Ascending aorta (tissue), 2 donors: ENCODE measurements at regions of chr1 and their contacts with region 1.

Region 1: GRCh38 chr1:114511032-114511785 is at the start of gene TRIM33:
- DNase-seq: peak; percentile 39 to 94
- H3K4me3 ChIP-seq: peak within 1 kb of the TSS; percentile 78 to 92
- H3K27ac ChIP-seq: peak within 1 kb of the TSS; percentile 91 to 98
- H3K4me1 ChIP-seq: peaks cover 0 to 24% of the 10 kb centered on the region in 2 donors
- H3K27me3 ChIP-seq: no peaks in the 10 kb centered on the region
- CTCF ChIP-seq: peak in 1 of 3 experiments; percentile 15
- total RNA-seq, gene TRIM33: 42.5 TPM

Region 2: GRCh38 chr1:113811888-113812660 is 699.1 kb before region 1 on chr1 and contains the start of gene RSBN1:
- intact Hi-C with region 1: loop called (anchors 1 kb)
- DNase-seq: peak; percentile 99 to 100
- H3K4me3 ChIP-seq: peak within 1 kb of the TSS; percentile 82 to 91
- H3K27ac ChIP-seq: peak within 1 kb of the TSS; percentile 95 to 97
- H3K4me1 ChIP-seq: peaks cover 0 to 5% of the 10 kb centered on the region in 2 donors
- H3K27me3 ChIP-seq: no peaks in the 10 kb centered on the region
- CTCF ChIP-seq: peak in 1 of 3 experiments; percentile 7
- total RNA-seq, gene RSBN1: 22.7 TPM

Region 3: DNA sequence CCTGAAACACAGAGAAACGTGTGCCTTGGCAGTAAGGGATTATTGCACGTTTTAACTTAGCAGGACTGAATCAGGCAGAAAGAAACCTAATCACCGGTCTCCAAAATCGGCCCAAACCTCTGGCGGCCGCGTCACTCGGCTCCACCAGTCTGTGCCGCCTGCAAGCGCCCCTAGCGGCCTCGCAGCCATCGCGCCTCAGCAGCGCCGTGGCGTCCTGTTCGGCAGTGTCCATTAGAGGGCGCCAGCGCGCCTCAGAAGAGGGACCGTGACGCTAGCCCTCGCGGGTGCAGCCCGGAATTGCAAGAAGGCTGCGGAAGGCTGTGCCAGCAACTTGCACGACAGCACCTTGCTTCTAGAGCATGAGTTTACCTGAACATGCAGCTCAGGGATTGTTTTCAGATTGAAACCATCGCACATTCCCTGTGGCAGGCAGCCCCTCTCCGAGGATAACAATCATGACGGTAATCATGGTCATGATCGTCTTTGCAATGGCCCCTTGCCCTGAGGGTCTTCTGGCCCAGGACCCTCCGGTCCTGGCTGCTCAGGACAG is 164.7 kb before region 1 on chr1:
- intact Hi-C with region 1: loop called (anchors 1 kb)
- DNase-seq: peak; percentile 74 to 98
- H3K4me3 ChIP-seq: peak overlapping the region; percentile 69 to 78
- H3K27ac ChIP-seq: peak overlapping the region; percentile 88 to 94
- H3K4me1 ChIP-seq: peaks cover 6 to 8% of the 10 kb centered on the region in 2 donors
- H3K27me3 ChIP-seq: no peaks in the 10 kb centered on the region
- CTCF ChIP-seq: peak; percentile 100

Region 4: DNA sequence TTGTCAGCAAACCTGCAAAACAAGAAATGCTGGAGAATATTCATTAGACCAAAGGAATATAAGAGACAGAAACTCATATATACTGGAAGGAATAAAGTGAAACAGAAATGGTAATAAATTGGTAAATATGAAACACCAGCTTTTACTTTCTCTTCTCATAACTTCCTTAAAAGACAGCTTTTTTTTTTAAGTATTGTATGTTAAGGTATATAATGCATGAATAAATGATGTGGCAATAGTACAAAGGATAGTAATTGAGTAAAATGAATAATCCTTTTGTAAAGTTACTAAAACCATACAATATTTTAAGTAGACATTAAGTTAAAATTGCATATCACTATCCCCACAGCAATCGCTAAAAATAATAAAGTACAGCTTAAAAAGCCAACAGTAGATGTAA is 65.0 kb before region 1 on chr1:
- intact Hi-C with region 1: no loop called
- DNase-seq: no peak
- H3K4me3 ChIP-seq: no peak overlapping the region
- H3K27ac ChIP-seq: no peak overlapping the region
- H3K4me1 ChIP-seq: no peaks in the 10 kb centered on the region
- H3K27me3 ChIP-seq: no peaks in the 10 kb centered on the region
- CTCF ChIP-seq: no peak

Region 5: DNA sequence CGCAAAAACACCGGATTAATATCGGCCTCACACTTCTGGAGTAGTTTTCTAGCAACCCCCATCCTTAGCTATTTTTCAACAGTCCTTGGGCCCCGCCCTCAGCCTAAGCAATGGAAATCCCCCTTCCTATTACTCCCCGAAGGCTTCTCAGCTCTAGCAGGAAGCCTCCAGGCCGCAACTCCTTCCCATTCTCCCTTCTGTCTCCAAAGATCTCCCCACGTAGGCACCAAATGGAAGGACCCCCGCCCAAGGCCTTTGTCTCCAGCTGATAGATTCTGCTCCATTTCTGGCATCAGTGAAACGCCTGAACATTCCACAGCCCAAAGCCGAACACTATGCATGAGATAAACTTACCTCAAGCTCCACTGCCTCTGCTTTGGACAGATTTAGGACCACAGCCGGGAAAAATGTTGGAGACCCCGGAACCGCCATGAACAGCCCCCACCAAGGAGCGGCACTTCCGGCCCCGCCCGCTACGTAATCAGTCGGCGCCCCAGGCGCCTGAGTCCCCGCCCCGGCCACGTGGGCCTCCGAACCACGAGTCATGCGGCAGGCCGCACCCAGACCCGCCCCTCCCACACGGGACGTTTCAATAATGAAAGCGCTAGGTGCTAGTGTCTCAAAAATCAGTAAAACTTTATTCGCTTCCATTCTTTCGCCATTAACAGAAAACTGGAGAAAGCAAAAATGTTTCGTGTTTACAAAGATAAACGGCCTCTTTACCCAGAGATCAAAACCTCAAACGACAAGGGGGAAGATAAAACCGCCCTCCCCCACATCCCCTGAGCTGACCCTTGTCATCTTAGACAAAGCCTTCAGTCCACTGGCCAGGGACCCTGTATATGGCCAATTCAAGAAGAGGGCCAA is 205.3 kb after region 1 on chr1 and contains the start of gene NRAS:
- intact Hi-C with region 1: loop called (anchors 5 kb)
- DNase-seq: peak; percentile 71 to 97
- H3K4me3 ChIP-seq: peak within 1 kb of the TSS; percentile 86 to 99
- H3K27ac ChIP-seq: peak within 1 kb of the TSS; percentile 87 to 95
- H3K4me1 ChIP-seq: peaks cover 3 to 12% of the 10 kb centered on the region in 2 donors
- H3K27me3 ChIP-seq: no peaks in the 10 kb centered on the region
- CTCF ChIP-seq: no peak
- total RNA-seq, gene NRAS: 10.7 TPM

Region 6: GRCh38 chr1:114757455-114758250 is 246.4 kb after region 1 on chr1 and contains the start of gene CSDE1:
- intact Hi-C with region 1: loop called (anchors 1 kb)
- DNase-seq: peak; percentile 90 to 98
- H3K4me3 ChIP-seq: peak within 1 kb of the TSS; percentile 81 to 89
- H3K27ac ChIP-seq: peak within 1 kb of the TSS; percentile 99
- H3K4me1 ChIP-seq: peaks cover 0 to 29% of the 10 kb centered on the region in 2 donors
- H3K27me3 ChIP-seq: no peaks in the 10 kb centered on the region
- CTCF ChIP-seq: peak in 2 of 3 experiments; percentile 20 to 27
- total RNA-seq, gene CSDE1: 290 TPM

Region 7: DNA sequence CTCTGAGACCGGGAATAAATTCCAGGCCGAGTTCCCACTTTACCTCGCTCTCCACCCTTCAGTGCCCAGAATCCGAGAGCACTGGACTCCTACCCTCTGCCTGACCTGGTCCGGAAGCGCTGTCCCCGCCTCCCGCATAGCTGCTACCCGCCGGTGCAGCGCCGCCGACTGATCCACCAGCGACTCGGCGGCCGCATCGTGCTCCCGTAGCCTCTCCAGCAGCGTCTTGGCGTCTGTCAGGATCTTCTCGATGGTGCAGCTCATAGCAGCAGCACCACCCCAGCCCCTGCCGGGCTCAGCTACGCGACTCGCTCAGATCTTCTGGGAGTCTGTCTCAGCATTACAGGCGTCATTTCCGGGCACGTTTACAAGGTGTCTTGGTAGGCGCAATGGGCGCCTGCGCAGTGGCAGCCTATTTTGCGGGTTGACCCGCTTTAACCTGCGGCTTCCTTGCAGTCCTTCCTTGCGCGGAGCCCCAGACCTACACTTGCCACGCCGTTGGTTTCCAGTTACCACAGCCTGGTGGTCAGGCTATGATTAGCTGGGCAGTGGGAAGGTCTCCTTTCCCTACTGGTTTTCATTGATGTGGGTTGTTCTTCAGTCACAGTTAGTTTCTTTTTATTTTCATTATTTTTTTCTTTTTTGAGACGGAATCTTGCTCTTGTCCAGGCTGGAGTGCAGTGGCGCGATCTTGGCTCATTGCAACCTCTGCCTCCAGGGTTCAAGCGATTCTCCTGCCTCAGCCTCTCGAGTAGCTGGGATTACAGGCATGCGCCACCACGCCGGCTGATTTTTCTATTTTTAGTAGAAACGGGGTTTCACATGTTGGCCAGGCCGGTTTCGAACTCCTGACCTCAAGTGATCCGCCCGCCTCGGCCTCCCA is 269.4 kb after region 1 on chr1 and contains the start of gene SIKE1:
- intact Hi-C with region 1: loop called (anchors 2 kb)
- DNase-seq: peak; percentile 71 to 96
- H3K4me3 ChIP-seq: peak within 1 kb of the TSS; percentile 76 to 92
- H3K27ac ChIP-seq: peak within 1 kb of the TSS; percentile 90
- H3K4me1 ChIP-seq: peaks cover 0 to 8% of the 10 kb centered on the region in 2 donors
- H3K27me3 ChIP-seq: no peaks in the 10 kb centered on the region
- CTCF ChIP-seq: no peak
- total RNA-seq, gene SIKE1: 17.1 TPM